ENCODE measurements at regions of chr2 and their contacts with region 1.

Region 1: GRCh38 chr2:38122344-38122743 is 46.4 kb upstream of the CYP1B1 start:
- DNase-seq: no peak
- H3K4me3 ChIP-seq: no peak overlapping the region
- H3K27ac ChIP-seq: peak overlapping the region in 1 of 2 donors; percentile 31
- H3K4me1 ChIP-seq: no peaks in the 10 kb centered on the region
- H3K27me3 ChIP-seq: no peaks in the 10 kb centered on the region
- CTCF ChIP-seq: no peak

Region 2: GRCh38 chr2:38159597-38159996 is 37.3 kb after region 1 on chr2:
- intact Hi-C with region 1: no loop called
- DNase-seq: no peak
- H3K4me3 ChIP-seq: no peak overlapping the region
- H3K27ac ChIP-seq: peak overlapping the region; percentile 63 to 73
- H3K4me1 ChIP-seq: peaks cover 5 to 15% of the 10 kb centered on the region in 2 donors
- H3K27me3 ChIP-seq: no peaks in the 10 kb centered on the region
- CTCF ChIP-seq: no peak

Region 3: DNA sequence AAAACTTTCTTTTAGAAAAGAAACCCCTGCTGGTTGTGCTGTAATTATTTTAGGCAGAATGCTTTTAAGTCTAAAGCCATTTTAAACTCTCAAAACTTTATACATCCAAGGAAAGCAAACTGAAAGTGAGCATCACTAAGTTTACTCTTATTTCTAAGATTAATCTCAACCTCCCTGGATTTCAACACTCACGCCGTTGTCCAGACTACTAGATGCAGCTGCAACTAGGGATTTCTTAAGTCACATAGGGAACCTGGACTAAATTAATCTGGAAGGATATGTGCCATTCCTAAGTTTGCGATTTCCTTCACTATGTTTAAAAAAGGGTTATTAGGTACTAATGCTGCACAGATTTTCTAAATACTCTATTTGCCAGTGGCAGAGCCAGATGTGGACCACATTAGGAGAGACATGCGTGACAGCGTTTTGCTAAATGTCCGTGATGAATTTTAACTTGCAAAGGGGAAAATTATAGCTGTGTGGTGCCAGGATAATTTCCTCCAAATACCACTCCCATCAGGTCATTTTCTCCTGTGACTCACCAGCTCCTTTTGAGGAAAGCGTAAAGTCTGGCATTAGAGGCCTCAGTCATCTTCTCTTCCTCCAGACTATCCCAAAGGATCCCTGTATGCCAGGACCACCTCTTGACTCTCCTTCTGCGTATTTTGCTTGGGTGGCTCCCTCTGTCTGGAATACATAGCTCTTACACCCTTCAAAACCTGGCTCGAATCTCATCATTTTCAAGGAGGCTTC is 111.1 kb after region 1 on chr2:
- intact Hi-C with region 1: loop called (anchors 5 kb)
- DNase-seq: peak in 1 of 2 donors; percentile 67
- H3K4me3 ChIP-seq: peak overlapping the region in 1 of 2 donors; percentile 46
- H3K27ac ChIP-seq: peak overlapping the region; percentile 31 to 58
- H3K4me1 ChIP-seq: peaks cover 0 to 6% of the 10 kb centered on the region in 2 donors
- H3K27me3 ChIP-seq: no peaks in the 10 kb centered on the region
- CTCF ChIP-seq: peak in 1 of 3 experiments; percentile 31

Measured in ascending aorta (tissue), 2 donors.